ENCODE measurements at regions of chr1 and their contacts with region 1.

Region 1: DNA sequence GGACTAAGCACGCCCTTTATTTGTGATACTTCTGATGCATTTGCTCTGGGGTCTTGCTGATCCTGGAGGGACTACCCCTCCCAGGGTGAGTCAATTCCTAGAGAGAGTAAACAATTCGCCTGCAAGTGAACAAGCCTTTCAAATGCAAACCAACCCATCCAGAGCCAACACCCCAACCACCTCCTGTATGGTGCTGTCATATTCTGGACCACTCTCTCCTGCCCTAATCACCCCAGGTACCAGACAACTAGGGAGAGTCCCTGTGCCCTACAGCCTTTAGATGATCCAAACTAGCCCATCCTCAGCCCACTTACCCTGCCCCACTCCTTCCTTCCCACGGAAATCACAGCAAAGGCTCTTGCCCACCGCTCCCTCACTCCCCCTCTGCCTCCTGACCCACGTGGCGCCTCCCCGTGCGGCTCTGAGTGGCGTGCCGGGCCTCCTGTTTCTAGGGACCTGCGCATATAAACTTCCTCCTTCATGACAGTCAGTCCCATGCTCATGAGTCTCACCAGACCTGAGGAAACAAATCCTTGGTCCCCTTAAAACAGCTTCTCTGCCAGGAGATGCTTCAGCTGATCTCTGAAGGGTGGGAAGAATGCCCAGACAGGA is 37.2 kb downstream of the ACTA1 start:
- DNase-seq: no peak
- ATAC-seq: peak; percentile 56; the same call in 2 of the 3 replicates
- H3K4me3 ChIP-seq: no peak overlapping the region
- H3K27ac ChIP-seq: no peak overlapping the region
- H3K4me1 ChIP-seq: no peaks in the 10 kb centered on the region
- H3K27me3 ChIP-seq: peaks cover 32 to 54% of the 10 kb centered on the region in 2 experiments
- CTCF ChIP-seq: no peak
- EP300 ChIP-seq: no peak
- POLR2A ChIP-seq: no peak
- RAD21 ChIP-seq: no peak

Region 2: GRCh38 chr1:229410692-229411443 is 14.2 kb after region 1 on chr1:
- CTCF ChIA-PET with region 1: no interaction called
- POLR2A ChIA-PET with region 1: interaction called, 10 read pairs
- in situ Hi-C with region 1: no loop called
- intact Hi-C with region 1: no loop called
- DNase-seq: peak in 3 of 4 experiments; percentile 43 to 46 (median 44)
- ATAC-seq: 0 out of 3 replicates have a peak, but pooled peaks have one; percentile 11
- H3K4me3 ChIP-seq: no peak overlapping the region
- H3K27ac ChIP-seq: no peak overlapping the region; the same call in 2 of the 3 replicates
- H3K4me1 ChIP-seq: peaks cover 6 to 15% of the 10 kb centered on the region in 2 experiments; a peak in 4 of 5 replicates
- H3K27me3 ChIP-seq: peaks cover 56 to 67% of the 10 kb centered on the region in 2 experiments
- CTCF ChIP-seq: no peak
- EP300 ChIP-seq: no peak
- POLR2A ChIP-seq: no peak
- RAD21 ChIP-seq: no peak

Measured in K562 (cell line).